GM13977 (cell line): ENCODE measurements at regions of chr22 and their contacts with region 1.

Region 1: DNA sequence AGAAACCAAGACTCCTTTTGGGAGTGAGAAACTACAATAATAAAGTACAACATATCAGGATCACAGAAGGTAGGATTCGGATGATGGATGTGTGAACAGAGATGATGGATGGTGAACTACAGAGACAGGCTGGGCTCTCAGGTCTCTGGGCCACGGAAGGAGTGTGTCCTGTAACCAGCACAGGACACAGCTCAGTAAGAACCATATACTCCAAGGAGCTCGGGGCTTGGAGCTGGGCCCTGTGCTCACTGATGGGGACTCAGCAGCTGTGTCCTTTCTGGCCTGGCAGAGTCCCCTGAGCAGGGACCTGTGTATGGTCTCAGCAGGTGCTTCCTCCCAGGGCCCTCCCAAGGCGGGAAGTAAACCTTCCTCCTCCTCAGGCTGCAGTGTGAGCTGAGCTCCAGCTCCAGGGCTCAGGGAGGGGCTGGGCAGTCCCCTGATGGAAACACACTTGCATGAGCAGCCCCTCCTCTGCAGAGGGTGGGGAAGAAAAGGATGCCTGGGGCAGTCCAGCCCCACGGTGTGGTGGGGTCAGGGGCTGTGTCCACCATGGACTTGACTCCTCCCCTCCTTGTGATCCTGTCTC is 39.8 kb upstream of the TOP3B start:
- DNase-seq: no peak
- CTCF ChIP-seq: no peak

Region 2: GRCh38 chr22:21972293-21972779 is 50.0 kb before region 1 on chr22:
- in situ Hi-C with region 1: loop called (anchors 5 kb)
- DNase-seq: peak; percentile 91
- CTCF ChIP-seq: peak; percentile 99